ENCODE measurements at regions of chr2 and their contacts with region 1.

Region 1: GRCh38 chr2:235055891-235056516 is 104.2 kb downstream of the SH3BP4 start:
- DNase-seq: peak; percentile 52
- ATAC-seq: peak; percentile 85
- H3K4me3 Mint-ChIP-seq: no peak overlapping the region
- H3K27ac Mint-ChIP-seq: no peak overlapping the region
- H3K4me1 Mint-ChIP-seq: peaks cover 4% of the 10 kb centered on the region
- H3K27me3 Mint-ChIP-seq: no peaks in the 10 kb centered on the region
- CTCF ChIP-seq: peak; percentile 54

Region 2: GRCh38 chr2:235066895-235067294 is 10.9 kb after region 1 on chr2:
- CTCF ChIA-PET with region 1: interaction called, 11 read pairs
- POLR2A ChIA-PET with region 1: no interaction called
- DNase-seq: no peak
- ATAC-seq: peak; percentile 46
- H3K4me3 Mint-ChIP-seq: no peak overlapping the region
- H3K27ac Mint-ChIP-seq: 0 out of 2 replicates have a peak overlapping the region, but pooled peaks have one; percentile 14
- H3K4me1 Mint-ChIP-seq: peaks cover 30% of the 10 kb centered on the region
- H3K27me3 Mint-ChIP-seq: no peaks in the 10 kb centered on the region
- CTCF ChIP-seq: no peak